Thyroid gland (tissue), 4 donors: ENCODE measurements at regions of chr4 and their contacts with region 1.

Region 1: GRCh38 chr4:185811509-185812364 is at the start of gene SORBS2:
- DNase-seq: peak; percentile 87 to 91
- H3K4me3 ChIP-seq: peak within 1 kb of the TSS; percentile 4 to 30 (median 30)
- H3K27ac ChIP-seq: peak within 1 kb of the TSS; percentile 83 to 97 (median 89)
- H3K4me1 ChIP-seq: peaks cover 23 to 25% of the 10 kb centered on the region in 2 donors
- H3K27me3 ChIP-seq: no peaks in the 10 kb centered on the region
- CTCF ChIP-seq: no peak
- POLR2A ChIP-seq: peak; percentile 62 to 94
- total RNA-seq, gene SORBS2: 290 to 437 (median 377) TPM

Region 2: GRCh38 chr4:185969657-185970056 is 157.9 kb after region 1 on chr4:
- intact Hi-C with region 1: no loop called
- DNase-seq: no peak
- H3K4me3 ChIP-seq: no peak overlapping the region
- H3K27ac ChIP-seq: no peak overlapping the region
- H3K4me1 ChIP-seq: peaks cover 24 to 33% of the 10 kb centered on the region in 2 donors
- H3K27me3 ChIP-seq: no peaks in the 10 kb centered on the region
- CTCF ChIP-seq: no peak
- POLR2A ChIP-seq: no peak

Region 3: DNA sequence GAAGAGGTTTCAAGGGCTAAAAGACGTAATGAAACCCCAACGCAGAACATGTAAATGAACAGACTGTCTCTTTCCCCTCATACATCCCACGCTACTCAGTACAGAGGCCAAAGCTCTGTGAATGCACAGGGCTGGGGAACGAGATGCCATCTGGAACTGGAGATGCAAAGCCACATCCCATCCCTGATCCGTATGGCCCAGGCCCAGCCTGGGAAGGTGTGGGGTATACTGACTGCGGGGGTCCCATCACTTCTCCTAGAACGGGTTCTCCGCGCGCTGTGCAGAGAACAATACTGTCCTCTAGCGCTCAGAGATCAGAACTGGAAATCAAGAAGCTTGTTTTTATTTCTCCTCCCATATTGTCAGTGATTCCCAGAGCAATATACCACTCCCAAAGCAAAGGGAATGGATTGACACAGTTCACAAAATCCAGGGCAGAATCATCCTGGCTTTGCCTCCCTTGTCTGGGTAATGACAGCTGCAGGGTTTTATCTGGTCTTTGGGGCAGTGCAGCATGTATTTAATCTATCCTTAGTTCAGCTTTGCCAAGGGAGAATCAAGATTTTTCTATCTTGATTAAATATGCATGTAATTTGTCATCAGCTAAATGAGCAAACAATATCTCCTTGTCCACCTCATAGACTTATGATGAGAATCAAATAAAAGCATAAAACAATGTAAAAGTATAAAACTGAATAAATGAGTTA is 209.9 kb after region 1 on chr4:
- intact Hi-C with region 1: loop called (anchors 10 kb)
- DNase-seq: peak in 1 of 2 donors; percentile 29
- H3K4me3 ChIP-seq: no peak overlapping the region
- H3K27ac ChIP-seq: peak overlapping the region; percentile 16 to 91 (median 85)
- H3K4me1 ChIP-seq: peaks cover 42 to 68% of the 10 kb centered on the region in 2 donors
- H3K27me3 ChIP-seq: no peaks in the 10 kb centered on the region
- CTCF ChIP-seq: peak; percentile 53 to 95 (median 88)
- POLR2A ChIP-seq: no peak